CD14-positive monocyte (primary cell): ENCODE measurements at regions of chr4 and their contacts with region 1.

Region 1: GRCh38 chr4:184408021-184408710 is 66.2 kb downstream of the IRF2 start:
- DNase-seq: no peak
- H3K4me3 ChIP-seq: peak overlapping the region in 1 of 3 experiments; percentile 28
- H3K4me3 Mint-ChIP-seq: no peak overlapping the region
- H3K27ac ChIP-seq: peak overlapping the region; percentile 69 to 77
- H3K27ac Mint-ChIP-seq: peak overlapping the region in 6 of 7 donors; percentile 75 to 89 (median 82)
- H3K4me1 ChIP-seq: peaks cover 37 to 48% of the 10 kb centered on the region in 2 donors
- H3K4me1 Mint-ChIP-seq: peaks cover 58% of the 10 kb centered on the region
- H3K27me3 ChIP-seq: no peaks in the 10 kb centered on the region
- H3K27me3 Mint-ChIP-seq: no peaks in the 10 kb centered on the region
- CTCF ChIP-seq: no peak

Region 2: GRCh38 chr4:184392748-184393334 is 15.3 kb before region 1 on chr4:
- intact Hi-C with region 1: loop called in 1 of 2 experiments (anchors 1 kb)
- DNase-seq: peak; percentile 80 to 91 (median 87)
- H3K4me3 ChIP-seq: peak overlapping the region; percentile 30 to 75 (median 39)
- H3K4me3 Mint-ChIP-seq: peak overlapping the region; percentile 78 to 92
- H3K27ac ChIP-seq: peak overlapping the region; percentile 92 to 95
- H3K27ac Mint-ChIP-seq: peak overlapping the region; percentile 91 to 97 (median 96)
- H3K4me1 ChIP-seq: peaks cover 58 to 75% of the 10 kb centered on the region in 2 donors
- H3K4me1 Mint-ChIP-seq: peaks cover 84% of the 10 kb centered on the region
- H3K27me3 ChIP-seq: no peaks in the 10 kb centered on the region
- H3K27me3 Mint-ChIP-seq: no peaks in the 10 kb centered on the region
- CTCF ChIP-seq: no peak

Region 3: DNA sequence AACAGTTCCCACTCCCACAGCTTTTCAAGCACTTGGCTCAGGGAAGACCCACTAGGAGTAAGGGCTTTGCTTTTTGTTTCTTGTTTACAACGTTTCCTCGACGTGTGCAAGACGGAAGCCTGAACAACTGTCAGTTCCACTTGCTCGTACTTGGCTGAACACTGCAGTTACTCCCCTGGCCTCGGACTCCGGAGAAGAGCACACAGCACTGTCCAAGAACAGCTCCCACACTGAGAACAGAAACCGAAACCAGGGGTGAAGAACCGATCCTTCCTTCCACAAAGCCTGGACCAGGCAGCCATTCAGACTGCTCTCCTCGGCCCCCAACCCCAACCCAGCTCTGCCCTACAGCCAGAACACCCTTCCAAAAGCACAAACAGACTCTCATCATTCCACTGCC is 40.7 kb after region 1 on chr4:
- intact Hi-C with region 1: loop called in 1 of 2 experiments (anchors 5 kb)
- DNase-seq: peak in 2 of 3 donors; percentile 50 to 61
- H3K4me3 ChIP-seq: peak overlapping the region; percentile 32 to 71 (median 46)
- H3K4me3 Mint-ChIP-seq: peak overlapping the region; percentile 85 to 93
- H3K27ac ChIP-seq: peak overlapping the region; percentile 71 to 76
- H3K27ac Mint-ChIP-seq: peak overlapping the region; percentile 94 to 98 (median 96)
- H3K4me1 ChIP-seq: peaks cover 67 to 82% of the 10 kb centered on the region in 2 donors
- H3K4me1 Mint-ChIP-seq: peaks cover 88% of the 10 kb centered on the region
- H3K27me3 ChIP-seq: no peaks in the 10 kb centered on the region
- H3K27me3 Mint-ChIP-seq: no peaks in the 10 kb centered on the region
- CTCF ChIP-seq: no peak